Aorta (tissue), 5 donors: ENCODE measurements at regions of chr12 and their contacts with region 1.

Region 1: GRCh38 chr12:67827820-67828383 is 161.3 kb upstream of the IFNG-AS1 start:
- DNase-seq: peak in 1 of 2 donors; percentile 50
- ATAC-seq: peak; percentile 90
- H3K4me3 ChIP-seq: peak overlapping the region; percentile 64 to 97
- H3K27ac ChIP-seq: peak overlapping the region; percentile 96 to 100
- H3K4me1 ChIP-seq: peaks cover 1 to 6% of the 10 kb centered on the region in 2 donors
- H3K27me3 ChIP-seq: no peaks in the 10 kb centered on the region

Region 2: GRCh38 chr12:67710141-67710540 is 117.8 kb before region 1 on chr12:
- intact Hi-C with region 1: no loop called
- DNase-seq: no peak
- ATAC-seq: no peak
- H3K4me3 ChIP-seq: no peak overlapping the region
- H3K27ac ChIP-seq: no peak overlapping the region
- H3K4me1 ChIP-seq: no peaks in the 10 kb centered on the region
- H3K27me3 ChIP-seq: no peaks in the 10 kb centered on the region

Region 3: GRCh38 chr12:67720351-67720856 is 107.5 kb before region 1 on chr12:
- intact Hi-C with region 1: loop called in 1 of 2 experiments (anchors 10 kb)
- DNase-seq: no peak
- ATAC-seq: peak; percentile 67
- H3K4me3 ChIP-seq: no peak overlapping the region
- H3K27ac ChIP-seq: no peak overlapping the region
- H3K4me1 ChIP-seq: peaks cover 6 to 7% of the 10 kb centered on the region in 2 donors
- H3K27me3 ChIP-seq: no peaks in the 10 kb centered on the region

Region 4: DNA sequence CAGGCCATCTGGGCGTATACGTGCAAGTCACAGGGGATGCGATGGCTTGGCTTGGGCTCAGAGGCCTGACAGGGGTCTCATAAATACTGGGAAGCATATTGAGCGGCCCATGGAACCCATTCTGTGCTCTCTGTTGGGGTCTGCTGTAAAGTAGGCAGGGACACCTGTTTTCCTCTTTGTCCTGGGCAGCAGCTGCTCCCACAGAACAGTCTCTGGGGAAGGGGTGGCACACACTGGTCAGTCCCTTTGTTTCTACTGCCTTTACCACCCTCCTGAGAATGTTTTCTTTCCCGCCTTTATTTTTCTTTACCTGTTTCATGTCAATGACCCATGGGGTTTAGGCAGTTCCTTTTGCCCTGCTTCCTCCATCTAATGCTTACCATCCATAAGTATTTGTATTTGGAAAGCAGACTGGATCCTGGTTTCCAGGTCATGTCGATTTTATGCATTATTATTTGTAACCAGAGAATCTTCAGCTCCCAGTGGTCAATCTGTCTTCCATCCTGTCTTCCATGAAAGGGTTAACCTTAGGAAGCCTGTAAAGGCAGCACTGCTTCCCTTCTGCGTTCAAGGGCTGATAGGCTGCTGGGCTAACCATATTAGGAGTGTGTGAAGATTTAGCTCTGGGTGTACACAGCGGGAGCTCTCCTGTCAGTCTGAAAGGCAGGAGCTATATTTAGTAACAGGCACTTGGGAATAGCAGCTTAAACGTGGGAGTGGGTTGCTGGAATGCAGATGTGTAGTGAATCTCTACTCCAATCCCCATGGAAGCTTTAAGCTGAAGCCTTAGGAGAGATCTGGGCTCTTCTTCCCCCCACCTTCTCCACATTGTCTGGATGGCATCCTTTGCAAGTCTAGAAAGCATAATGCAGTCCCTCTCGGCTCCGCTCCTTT is 55.4 kb before region 1 on chr12:
- intact Hi-C with region 1: loop called in 1 of 2 experiments (anchors 10 kb)
- DNase-seq: no peak
- ATAC-seq: peak; percentile 81
- H3K4me3 ChIP-seq: no peak overlapping the region
- H3K27ac ChIP-seq: peak overlapping the region; percentile 3 to 55
- H3K4me1 ChIP-seq: peaks cover 0 to 6% of the 10 kb centered on the region in 2 donors
- H3K27me3 ChIP-seq: no peaks in the 10 kb centered on the region